CD4-positive, alpha-beta T cell (primary cell): ENCODE measurements at regions of chr11 and their contacts with region 1.

Region 1: GRCh38 chr11:72102946-72103753 is at the start of gene LAMTOR1:
- DNase-seq: peak; percentile 94 to 98 (median 97)
- ATAC-seq: peak; percentile 95
- H3K4me3 ChIP-seq: peak within 1 kb of the TSS; percentile 93
- H3K4me3 Mint-ChIP-seq: peak within 1 kb of the TSS; percentile 91
- H3K27ac ChIP-seq: peak within 1 kb of the TSS; percentile 88 to 93
- H3K27ac Mint-ChIP-seq: peak within 1 kb of the TSS; percentile 98
- H3K4me1 ChIP-seq: peaks cover 34% of the 10 kb centered on the region
- H3K4me1 Mint-ChIP-seq: peaks cover 49% of the 10 kb centered on the region
- H3K27me3 ChIP-seq: no peaks in the 10 kb centered on the region
- H3K27me3 Mint-ChIP-seq: no peaks in the 10 kb centered on the region
- CTCF ChIP-seq: peak; percentile 36
- total RNA-seq, gene LAMTOR1: 29.5 to 30.4 TPM

Region 2: GRCh38 chr11:71787098-71787823 is 315.9 kb before region 1 on chr11:
- CTCF ChIA-PET with region 1: no interaction called
- POLR2A ChIA-PET with region 1: no interaction called
- intact Hi-C with region 1: loop called in 1 of 2 experiments (anchors 10 kb)
- DNase-seq: peak; percentile 85 to 98 (median 92)
- ATAC-seq: peak; percentile 93
- H3K4me3 ChIP-seq: peak overlapping the region; percentile 85
- H3K4me3 Mint-ChIP-seq: peak overlapping the region; percentile 99
- H3K27ac ChIP-seq: peak overlapping the region; percentile 73 to 98
- H3K27ac Mint-ChIP-seq: peak overlapping the region; percentile 99
- H3K4me1 ChIP-seq: peaks cover 13% of the 10 kb centered on the region
- H3K4me1 Mint-ChIP-seq: peaks cover 18% of the 10 kb centered on the region
- H3K27me3 ChIP-seq: no peaks in the 10 kb centered on the region
- H3K27me3 Mint-ChIP-seq: no peaks in the 10 kb centered on the region
- CTCF ChIP-seq: no peak

Region 3: DNA sequence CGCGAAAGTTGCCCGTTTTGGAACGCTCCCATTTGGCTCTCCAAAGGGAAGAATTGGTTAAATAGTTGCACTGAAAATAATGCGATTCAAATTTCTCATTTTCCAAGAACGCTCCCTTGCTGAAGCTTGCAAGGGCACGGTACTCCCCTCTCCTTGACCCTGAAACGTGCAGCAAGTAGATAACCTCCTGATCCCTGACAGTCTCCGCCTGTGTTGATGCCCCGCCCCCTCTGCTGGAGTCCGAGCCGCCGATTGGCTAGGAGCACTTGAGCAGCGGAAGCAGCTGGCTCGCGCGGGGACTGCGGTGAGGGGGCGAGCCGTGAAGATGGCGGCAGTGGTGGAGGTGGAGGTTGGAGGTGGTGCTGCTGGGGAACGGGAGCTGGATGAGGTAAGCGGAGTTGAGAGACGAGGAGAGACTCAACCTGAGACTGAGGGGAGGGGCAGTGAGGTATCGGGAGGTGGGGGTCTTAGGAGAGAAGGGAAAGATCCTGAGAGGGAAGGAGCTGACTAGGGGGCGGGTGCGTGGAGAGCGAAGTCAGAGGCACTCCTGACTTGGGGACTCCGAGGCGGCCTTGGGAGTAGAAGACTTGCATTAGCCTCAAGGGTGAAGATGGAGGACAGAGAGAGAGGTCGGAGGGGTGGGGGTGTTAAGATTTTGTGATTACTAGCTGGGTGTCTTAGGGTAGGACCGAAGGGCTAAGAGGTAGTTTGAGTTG is 174.3 kb before region 1 on chr11 and contains the start of gene RNF121:
- CTCF ChIA-PET with region 1: no interaction called
- POLR2A ChIA-PET with region 1: interaction called, 6 read pairs
- intact Hi-C with region 1: loop called in 1 of 2 experiments (anchors 2 kb)
- DNase-seq: peak; percentile 93 to 98 (median 97)
- ATAC-seq: peak; percentile 86
- H3K4me3 ChIP-seq: peak within 1 kb of the TSS; percentile 79
- H3K4me3 Mint-ChIP-seq: peak within 1 kb of the TSS; percentile 96
- H3K27ac ChIP-seq: peak within 1 kb of the TSS; percentile 92 to 95
- H3K27ac Mint-ChIP-seq: peak within 1 kb of the TSS; percentile 93
- H3K4me1 ChIP-seq: peaks cover 32% of the 10 kb centered on the region
- H3K4me1 Mint-ChIP-seq: peaks cover 57% of the 10 kb centered on the region
- H3K27me3 ChIP-seq: no peaks in the 10 kb centered on the region
- H3K27me3 Mint-ChIP-seq: no peaks in the 10 kb centered on the region
- CTCF ChIP-seq: no peak
- total RNA-seq, gene RNF121: 10.1 to 10.4 TPM

Region 4: DNA sequence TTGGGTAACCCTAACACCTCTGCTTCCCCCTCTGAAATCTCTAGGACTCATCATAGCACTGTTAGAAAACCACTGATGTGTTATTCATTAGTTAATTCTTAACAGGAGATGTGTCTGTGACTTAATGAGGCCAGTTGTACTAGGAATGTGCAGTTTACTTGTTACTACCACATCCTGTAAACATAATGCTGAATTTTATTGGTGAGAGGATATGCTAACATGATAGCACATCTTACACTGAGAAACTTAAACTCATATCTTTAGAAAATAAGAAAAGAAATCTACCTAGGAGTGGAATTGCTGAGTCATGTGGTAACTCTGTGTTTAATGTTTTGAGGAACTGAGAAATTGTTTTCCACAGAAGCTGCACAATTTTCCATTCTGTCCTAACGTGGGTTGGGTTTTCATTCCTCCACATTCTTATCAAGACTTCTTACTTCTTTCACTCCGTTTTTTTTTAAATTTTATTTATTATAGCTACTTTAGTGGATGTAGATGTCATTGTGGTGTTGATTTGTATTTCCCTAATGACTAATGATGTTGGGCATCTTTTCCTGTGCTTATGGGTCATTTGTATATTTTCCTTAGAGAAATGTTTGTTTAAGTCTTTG is 140.6 kb before region 1 on chr11:
- CTCF ChIA-PET with region 1: no interaction called
- POLR2A ChIA-PET with region 1: no interaction called
- intact Hi-C with region 1: no loop called
- DNase-seq: peak in 2 of 14 experiments; percentile 8 to 11
- ATAC-seq: no peak
- H3K4me3 ChIP-seq: no peak overlapping the region
- H3K4me3 Mint-ChIP-seq: no peak overlapping the region
- H3K27ac ChIP-seq: no peak overlapping the region
- H3K27ac Mint-ChIP-seq: no peak overlapping the region
- H3K4me1 ChIP-seq: no peaks in the 10 kb centered on the region
- H3K4me1 Mint-ChIP-seq: no peaks in the 10 kb centered on the region
- H3K27me3 ChIP-seq: no peaks in the 10 kb centered on the region
- H3K27me3 Mint-ChIP-seq: no peaks in the 10 kb centered on the region
- CTCF ChIP-seq: no peak

Region 5: DNA sequence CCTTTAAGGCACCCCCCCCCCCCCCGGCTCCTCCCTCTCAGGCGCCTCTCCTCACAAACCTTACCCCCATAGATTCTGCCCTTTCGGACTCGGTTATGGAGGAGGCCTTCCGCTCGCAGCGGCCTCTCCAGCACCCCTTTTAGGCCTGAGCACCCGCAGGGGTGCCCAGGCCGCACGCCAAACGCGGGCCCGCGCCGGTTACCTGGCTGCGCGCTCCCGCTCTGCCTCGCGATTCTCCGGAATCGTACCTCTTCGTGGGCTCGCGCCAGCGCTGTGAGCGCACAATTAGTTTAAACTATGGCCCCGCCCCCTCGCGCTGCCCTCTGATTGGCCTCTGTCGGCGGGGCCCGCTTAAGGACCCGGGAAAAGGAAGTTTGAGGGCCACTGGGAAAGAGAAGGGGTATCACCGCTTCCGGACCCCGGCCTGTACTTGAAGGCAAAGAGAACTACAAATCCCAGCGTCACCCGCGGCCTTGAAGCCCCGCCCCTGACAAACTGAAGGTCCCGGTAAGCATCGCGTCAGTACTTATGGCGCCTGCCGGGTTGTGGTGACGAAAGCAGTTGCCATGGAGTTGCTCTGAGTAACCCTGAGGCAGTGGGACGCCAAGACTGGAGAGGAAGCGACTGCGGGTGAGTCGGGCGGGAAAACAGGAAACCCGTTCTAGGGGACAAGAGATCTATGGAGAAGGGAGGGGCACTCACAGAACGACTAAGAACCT is 22.7 kb before region 1 on chr11 and contains the starts of genes LRRC51 and NUMA1:
- CTCF ChIA-PET with region 1: interaction called, 3 read pairs
- POLR2A ChIA-PET with region 1: interaction called, 4 read pairs
- intact Hi-C with region 1: loop called (anchors 1 to 2 kb)
- DNase-seq: peak; percentile 97 to 100 (median 99)
- ATAC-seq: peak; percentile 84
- H3K4me3 ChIP-seq: peak within 1 kb of the TSS; percentile 73
- H3K4me3 Mint-ChIP-seq: peak within 1 kb of the TSS; percentile 95
- H3K27ac ChIP-seq: peak within 1 kb of the TSS; percentile 82 to 93
- H3K27ac Mint-ChIP-seq: peak within 1 kb of the TSS; percentile 92
- H3K4me1 ChIP-seq: peaks cover 31% of the 10 kb centered on the region
- H3K4me1 Mint-ChIP-seq: peaks cover 41% of the 10 kb centered on the region
- H3K27me3 ChIP-seq: no peaks in the 10 kb centered on the region
- H3K27me3 Mint-ChIP-seq: no peaks in the 10 kb centered on the region
- CTCF ChIP-seq: no peak
- total RNA-seq, gene LRRC51: 0.87 to 1.1 TPM
- total RNA-seq, gene NUMA1: 191 to 197 TPM

Region 6: DNA sequence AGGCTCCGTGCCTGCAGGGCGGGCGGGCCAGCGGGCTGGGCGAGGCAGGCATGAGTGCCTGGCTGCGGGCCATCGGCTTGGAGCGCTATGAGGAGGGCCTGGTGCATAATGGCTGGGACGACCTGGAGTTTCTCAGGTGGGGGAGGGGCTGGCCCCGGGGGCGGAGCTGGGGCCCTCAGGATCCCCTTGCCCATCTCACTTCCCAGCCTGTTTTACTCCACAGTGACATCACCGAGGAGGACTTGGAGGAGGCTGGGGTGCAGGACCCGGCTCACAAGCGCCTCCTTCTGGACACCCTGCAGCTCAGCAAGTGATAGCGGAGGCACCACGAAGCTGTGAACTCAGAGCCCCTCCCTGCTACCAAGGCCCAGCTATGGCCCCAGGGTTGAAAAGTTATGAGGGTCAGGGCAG is 134.9 kb after region 1 on chr11:
- CTCF ChIA-PET with region 1: no interaction called
- POLR2A ChIA-PET with region 1: no interaction called
- intact Hi-C with region 1: no loop called
- DNase-seq: peak in 9 of 14 experiments; percentile 24 to 74 (median 38)
- ATAC-seq: peak; percentile 73
- H3K4me3 ChIP-seq: no peak overlapping the region
- H3K4me3 Mint-ChIP-seq: no peak overlapping the region
- H3K27ac ChIP-seq: no peak overlapping the region
- H3K27ac Mint-ChIP-seq: no peak overlapping the region
- H3K4me1 ChIP-seq: peaks cover 20% of the 10 kb centered on the region
- H3K4me1 Mint-ChIP-seq: peaks cover 25% of the 10 kb centered on the region
- H3K27me3 ChIP-seq: peaks cover 33 to 39% of the 10 kb centered on the region in 2 experiments
- H3K27me3 Mint-ChIP-seq: peaks cover 39% of the 10 kb centered on the region
- CTCF ChIP-seq: peak; percentile 58

Region 7: GRCh38 chr11:72609045-72609444 is 505.9 kb after region 1 on chr11:
- CTCF ChIA-PET with region 1: no interaction called
- POLR2A ChIA-PET with region 1: no interaction called
- intact Hi-C with region 1: no loop called
- DNase-seq: peak in 3 of 14 experiments; percentile 21 to 45 (median 38)
- ATAC-seq: no peak
- H3K4me3 ChIP-seq: no peak overlapping the region
- H3K4me3 Mint-ChIP-seq: no peak overlapping the region
- H3K27ac ChIP-seq: no peak overlapping the region
- H3K27ac Mint-ChIP-seq: no peak overlapping the region
- H3K4me1 ChIP-seq: peaks cover 12% of the 10 kb centered on the region
- H3K4me1 Mint-ChIP-seq: peaks cover 8% of the 10 kb centered on the region
- H3K27me3 ChIP-seq: peaks cover 0 to 16% of the 10 kb centered on the region in 2 experiments
- H3K27me3 Mint-ChIP-seq: peaks cover 39% of the 10 kb centered on the region
- CTCF ChIP-seq: peak; percentile 28